HCT116 (cell line): ENCODE measurements at regions of chr7 and their contacts with region 1.

Region 1: GRCh38 chr7:30594549-30595435 is at the start of gene GARS1:
- DNase-seq: peak; percentile 86
- ATAC-seq: peak; percentile 90
- H3K4me3 ChIP-seq: peak within 1 kb of the TSS; percentile 88 to 98
- H3K27ac ChIP-seq: peak within 1 kb of the TSS; percentile 92
- H3K4me1 ChIP-seq: peaks cover 5 to 16% of the 10 kb centered on the region in 2 experiments; a peak in 3 of 4 replicates
- H3K27me3 ChIP-seq: no peaks in the 10 kb centered on the region
- CTCF ChIP-seq: no peak
- POLR2A ChIP-seq: peak; percentile 83
- RAD21 ChIP-seq: no peak
- total RNA-seq, gene GARS1: 329 TPM

Region 2: GRCh38 chr7:30650421-30650808 is 55.6 kb after region 1 on chr7:
- CTCF ChIA-PET with region 1: no interaction called
- POLR2A ChIA-PET with region 1: no interaction called
- RAD21 ChIA-PET with region 1: no interaction called
- intact Hi-C with region 1: no loop called
- DNase-seq: no peak
- ATAC-seq: no peak
- H3K4me3 ChIP-seq: no peak overlapping the region
- H3K27ac ChIP-seq: no peak overlapping the region
- H3K4me1 ChIP-seq: no peaks in the 10 kb centered on the region
- H3K27me3 ChIP-seq: no peaks in the 10 kb centered on the region
- CTCF ChIP-seq: no peak
- POLR2A ChIP-seq: no peak
- RAD21 ChIP-seq: no peak

Region 3: GRCh38 chr7:32495298-32496176 is 1900.7 kb after region 1 on chr7 and contains the start of gene AVL9:
- CTCF ChIA-PET with region 1: no interaction called
- POLR2A ChIA-PET with region 1: no interaction called
- RAD21 ChIA-PET with region 1: no interaction called
- intact Hi-C with region 1: loop called (anchors 10 kb)
- DNase-seq: peak; percentile 90
- ATAC-seq: peak; percentile 97
- H3K4me3 ChIP-seq: peak within 1 kb of the TSS; percentile 79 to 81
- H3K27ac ChIP-seq: peak within 1 kb of the TSS; percentile 79
- H3K4me1 ChIP-seq: peaks cover 9 to 27% of the 10 kb centered on the region in 2 experiments
- H3K27me3 ChIP-seq: no peaks in the 10 kb centered on the region
- CTCF ChIP-seq: no peak
- POLR2A ChIP-seq: peak; percentile 85
- RAD21 ChIP-seq: no peak
- total RNA-seq, gene AVL9: 89.0 TPM